CD14-positive monocyte (primary cell): ENCODE measurements at regions of chr19 and their contacts with region 1.

Region 1: DNA sequence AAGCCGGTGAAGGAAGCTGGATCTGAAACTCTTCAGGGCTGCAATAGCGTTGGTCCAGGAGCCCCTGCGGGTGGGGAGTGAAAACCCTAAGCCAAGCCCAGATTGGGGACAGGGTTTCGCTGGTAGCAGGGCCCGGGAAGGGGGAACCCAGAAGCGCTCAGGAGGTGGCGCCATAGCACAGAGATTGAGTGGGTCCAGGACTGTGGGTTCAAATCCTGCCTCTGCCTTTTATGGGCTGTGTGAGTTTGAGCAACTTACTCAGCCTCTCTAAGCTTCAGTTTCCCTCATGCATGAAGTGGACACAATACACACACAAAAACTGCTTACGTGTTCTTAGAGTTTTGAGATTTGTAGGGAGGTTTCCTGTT is 8.3 kb upstream of the SYCN start:
- DNase-seq: peak; percentile 6 to 27 (median 15)
- H3K4me3 ChIP-seq: no peak overlapping the region
- H3K4me3 Mint-ChIP-seq: no peak overlapping the region
- H3K27ac ChIP-seq: no peak overlapping the region
- H3K27ac Mint-ChIP-seq: no peak overlapping the region
- H3K4me1 ChIP-seq: no peaks in the 10 kb centered on the region
- H3K4me1 Mint-ChIP-seq: no peaks in the 10 kb centered on the region
- H3K27me3 ChIP-seq: no peaks in the 10 kb centered on the region
- H3K27me3 Mint-ChIP-seq: peaks cover 0 to 7% (median 3%) of the 10 kb centered on the region in 3 donors
- CTCF ChIP-seq: peak; percentile 23

Region 2: GRCh38 chr19:39328046-39328705 is 115.8 kb after region 1 on chr19:
- intact Hi-C with region 1: loop called in 1 of 2 experiments (anchors 10 kb)
- DNase-seq: peak; percentile 48 to 62 (median 59)
- H3K4me3 ChIP-seq: no peak overlapping the region
- H3K4me3 Mint-ChIP-seq: no peak overlapping the region
- H3K27ac ChIP-seq: peak overlapping the region in 1 of 2 donors; percentile 62
- H3K27ac Mint-ChIP-seq: peak overlapping the region in 5 of 7 donors; percentile 49 to 87 (median 76)
- H3K4me1 ChIP-seq: peaks cover 12 to 43% of the 10 kb centered on the region in 2 donors
- H3K4me1 Mint-ChIP-seq: peaks cover 49% of the 10 kb centered on the region
- H3K27me3 ChIP-seq: no peaks in the 10 kb centered on the region
- H3K27me3 Mint-ChIP-seq: peaks cover 0 to 1% (median 0%) of the 10 kb centered on the region in 3 donors
- CTCF ChIP-seq: peak; percentile 95